CD14-positive monocyte (primary cell): ENCODE measurements at regions of chr16 and their contacts with region 1.

Region 1: DNA sequence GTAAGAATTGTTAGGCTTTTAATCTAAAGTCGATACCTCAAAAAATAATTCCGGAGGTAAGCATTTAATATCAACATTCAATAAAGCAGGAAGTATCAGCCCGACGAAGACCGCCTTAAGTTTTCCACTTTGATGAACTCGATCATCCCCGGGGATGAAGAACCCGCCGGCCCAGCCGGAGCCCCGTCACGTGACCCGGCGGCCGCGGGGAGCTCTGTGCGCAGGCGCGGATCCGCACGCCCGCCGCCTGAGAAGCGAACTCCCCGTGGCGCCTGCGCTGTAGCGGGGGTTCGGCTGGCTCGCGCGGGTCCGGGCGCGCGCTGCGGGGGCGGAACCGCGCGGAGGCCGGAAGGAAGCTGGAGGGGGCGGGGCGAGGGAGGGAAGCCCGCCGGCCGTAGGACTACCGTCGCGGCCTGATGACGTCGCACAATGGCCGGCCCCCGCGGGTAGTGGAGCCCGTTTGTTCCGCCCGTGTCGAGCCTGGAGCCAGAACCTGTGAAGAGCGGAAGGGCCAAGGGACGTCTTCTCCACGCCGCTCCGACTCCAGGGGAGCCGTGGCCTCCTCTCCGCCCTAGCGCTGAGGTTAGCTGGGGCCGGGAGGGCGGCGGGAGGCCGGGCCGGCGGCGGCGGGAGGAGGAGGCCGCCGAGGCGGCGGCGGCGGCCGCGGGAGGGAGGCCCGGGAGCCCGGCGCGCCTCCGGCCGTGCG is at the start of gene ZC3H18:
- DNase-seq: peak; percentile 94 to 97 (median 95)
- H3K4me3 ChIP-seq: peak within 1 kb of the TSS; percentile 61 to 88 (median 78)
- H3K4me3 Mint-ChIP-seq: peak within 1 kb of the TSS; percentile 85 to 90
- H3K27ac ChIP-seq: peak within 1 kb of the TSS; percentile 69 to 74
- H3K27ac Mint-ChIP-seq: peak within 1 kb of the TSS; percentile 83 to 93 (median 85)
- H3K4me1 ChIP-seq: peaks cover 18 to 26% of the 10 kb centered on the region in 2 donors
- H3K4me1 Mint-ChIP-seq: peaks cover 20% of the 10 kb centered on the region
- H3K27me3 ChIP-seq: no peaks in the 10 kb centered on the region
- H3K27me3 Mint-ChIP-seq: peaks cover 0 to 5% (median 0%) of the 10 kb centered on the region in 3 donors
- CTCF ChIP-seq: no peak
- polyA plus RNA-seq, gene ZC3H18: 5.5 to 36.4 (median 6.8) TPM

Region 2: GRCh38 chr16:87765776-87766484 is 804.2 kb before region 1 on chr16 and contains the start of gene KLHDC4:
- intact Hi-C with region 1: loop called (anchors 5 kb)
- DNase-seq: peak; percentile 80 to 86 (median 81)
- H3K4me3 ChIP-seq: peak within 1 kb of the TSS; percentile 79 to 93 (median 86)
- H3K4me3 Mint-ChIP-seq: peak within 1 kb of the TSS; percentile 100
- H3K27ac ChIP-seq: peak within 1 kb of the TSS; percentile 79 to 92
- H3K27ac Mint-ChIP-seq: peak within 1 kb of the TSS; percentile 96 to 99 (median 97)
- H3K4me1 ChIP-seq: peaks cover 13 to 18% of the 10 kb centered on the region in 2 donors
- H3K4me1 Mint-ChIP-seq: peaks cover 22% of the 10 kb centered on the region
- H3K27me3 ChIP-seq: no peaks in the 10 kb centered on the region
- H3K27me3 Mint-ChIP-seq: peaks cover 0 to 10% (median under 1%) of the 10 kb centered on the region in 3 donors
- CTCF ChIP-seq: no peak
- polyA plus RNA-seq, gene KLHDC4: 11.2 to 26.4 (median 12.6) TPM

Region 3: DNA sequence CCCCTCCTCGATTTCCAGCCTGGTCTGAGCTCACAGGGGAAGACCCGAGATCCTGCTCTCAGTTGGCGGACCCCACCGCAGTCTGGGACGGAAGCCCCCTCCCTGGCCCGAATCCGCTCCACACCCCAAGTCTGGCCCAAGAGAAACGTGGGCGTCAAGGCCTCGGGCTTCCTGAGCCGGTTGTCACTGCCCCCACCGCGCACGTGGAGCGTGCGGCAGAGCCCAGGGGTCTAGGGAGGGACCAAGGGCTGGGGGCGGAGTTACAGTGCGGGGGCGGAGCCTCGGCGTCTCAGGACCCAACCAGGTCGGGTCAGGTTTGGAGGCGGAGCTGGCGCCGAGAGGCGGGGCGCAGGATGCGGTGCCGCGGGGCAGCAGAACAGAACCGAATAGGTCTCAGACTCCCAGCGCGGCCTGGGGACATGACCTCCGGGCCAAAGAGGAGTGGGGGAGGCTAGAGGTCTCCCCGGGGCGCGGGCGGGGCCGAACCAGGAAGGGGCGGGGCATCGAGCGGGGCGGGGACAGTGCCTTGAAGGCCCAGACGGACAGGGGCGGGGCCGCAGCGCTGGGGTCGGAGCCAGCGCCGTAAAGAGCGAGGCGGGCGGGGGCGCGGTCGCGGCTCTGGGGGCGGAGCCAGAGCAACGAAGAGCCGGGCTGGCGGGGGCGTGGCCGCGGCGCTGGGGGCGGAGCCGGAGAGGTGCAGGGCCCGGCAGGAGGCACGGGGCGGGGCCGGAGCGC is 117.5 kb before region 1 on chr16:
- intact Hi-C with region 1: loop called in 1 of 2 experiments (anchors 5 kb)
- DNase-seq: peak; percentile 91 to 95 (median 94)
- H3K4me3 ChIP-seq: peak overlapping the region; percentile 38 to 83 (median 65)
- H3K4me3 Mint-ChIP-seq: peak overlapping the region; percentile 79 to 87
- H3K27ac ChIP-seq: peak overlapping the region; percentile 58 to 75
- H3K27ac Mint-ChIP-seq: peak overlapping the region; percentile 57 to 94 (median 82)
- H3K4me1 ChIP-seq: peaks cover 46 to 60% of the 10 kb centered on the region in 2 donors
- H3K4me1 Mint-ChIP-seq: peaks cover 44% of the 10 kb centered on the region
- H3K27me3 ChIP-seq: peaks cover 27 to 59% of the 10 kb centered on the region in 2 donors
- H3K27me3 Mint-ChIP-seq: peaks cover 52 to 86% (median 57%) of the 10 kb centered on the region in 3 donors
- CTCF ChIP-seq: no peak

Region 4: DNA sequence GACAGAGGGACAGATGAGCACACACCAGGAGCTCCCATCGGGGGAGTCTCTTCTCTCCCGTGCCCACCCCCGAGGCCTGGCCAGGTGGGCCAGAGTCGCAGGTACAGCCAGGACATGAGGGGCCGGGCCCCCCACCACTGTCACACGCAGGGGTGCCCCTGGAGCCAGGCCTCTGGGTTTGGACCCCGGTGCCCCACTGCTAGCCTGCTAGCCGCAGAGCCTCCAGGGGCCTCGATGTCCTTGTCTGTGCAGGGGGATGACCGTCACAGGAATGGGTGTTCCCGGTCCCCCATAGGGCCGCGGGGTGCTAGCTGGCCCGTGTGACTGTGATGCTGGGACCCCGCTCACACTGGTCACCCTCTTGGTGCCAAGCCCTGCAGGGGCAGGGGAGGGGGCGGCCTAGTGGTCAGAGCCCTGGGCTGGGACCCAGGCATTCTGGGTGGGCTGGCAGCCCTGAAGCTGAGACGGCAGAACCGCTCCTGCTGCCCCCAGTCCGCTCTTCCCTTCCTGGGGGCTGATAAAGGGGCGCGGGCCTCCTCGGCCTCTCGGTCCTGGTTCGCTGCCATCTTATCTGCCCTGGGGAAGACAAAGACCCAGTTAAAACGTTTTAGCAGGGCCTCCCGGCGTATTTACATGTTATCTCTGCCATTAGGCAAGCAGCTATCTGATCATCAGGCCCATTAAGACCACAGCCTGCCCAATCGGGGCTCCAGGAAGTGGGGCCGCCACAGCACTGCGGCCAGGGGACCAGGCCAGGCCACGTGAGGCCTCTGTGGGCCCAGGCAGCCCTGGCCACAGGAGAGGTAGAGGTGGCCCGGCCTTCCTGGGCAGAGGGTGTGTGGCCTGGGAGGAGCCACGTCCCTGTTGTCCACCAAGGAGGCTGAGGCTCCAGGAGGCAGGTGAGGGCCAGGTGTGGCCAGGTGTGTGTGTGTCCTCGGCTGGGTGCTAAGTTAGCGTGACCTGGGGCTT is 57.1 kb before region 1 on chr16:
- intact Hi-C with region 1: no loop called
- DNase-seq: no peak
- H3K4me3 ChIP-seq: no peak overlapping the region
- H3K4me3 Mint-ChIP-seq: no peak overlapping the region
- H3K27ac ChIP-seq: no peak overlapping the region
- H3K27ac Mint-ChIP-seq: no peak overlapping the region
- H3K4me1 ChIP-seq: no peaks in the 10 kb centered on the region
- H3K4me1 Mint-ChIP-seq: no peaks in the 10 kb centered on the region
- H3K27me3 ChIP-seq: no peaks in the 10 kb centered on the region
- H3K27me3 Mint-ChIP-seq: peaks cover 1 to 5% (median 1%) of the 10 kb centered on the region in 3 donors
- CTCF ChIP-seq: no peak

Region 5: GRCh38 chr16:88662843-88663606 is 92.9 kb after region 1 on chr16 and contains the start of gene MVD:
- intact Hi-C with region 1: loop called (anchors 5 to 10 kb)
- DNase-seq: peak; percentile 97 to 98 (median 98)
- H3K4me3 ChIP-seq: peak within 1 kb of the TSS; percentile 69 to 87 (median 81)
- H3K4me3 Mint-ChIP-seq: peak within 1 kb of the TSS; percentile 83 to 91
- H3K27ac ChIP-seq: peak within 1 kb of the TSS; percentile 20 to 93
- H3K27ac Mint-ChIP-seq: peak within 1 kb of the TSS; percentile 83 to 98 (median 92)
- H3K4me1 ChIP-seq: peaks cover 20 to 21% of the 10 kb centered on the region in 2 donors
- H3K4me1 Mint-ChIP-seq: peaks cover 19% of the 10 kb centered on the region
- H3K27me3 ChIP-seq: no peaks in the 10 kb centered on the region
- H3K27me3 Mint-ChIP-seq: peaks cover 0 to 3% (median 3%) of the 10 kb centered on the region in 3 donors
- CTCF ChIP-seq: no peak
- polyA plus RNA-seq, gene MVD: 9.0 to 17.9 (median 12.2) TPM

Region 6: GRCh38 chr16:88706288-88706964 is 136.3 kb after region 1 on chr16 and contains the starts of genes CTU2 and RNF166:
- intact Hi-C with region 1: loop called in 1 of 2 experiments (anchors 2 kb)
- DNase-seq: peak; percentile 87 to 94 (median 90)
- H3K4me3 ChIP-seq: peak within 1 kb of the TSS; percentile 78 to 96 (median 93)
- H3K4me3 Mint-ChIP-seq: peak within 1 kb of the TSS; percentile 99
- H3K27ac ChIP-seq: peak within 1 kb of the TSS; percentile 84 to 88
- H3K27ac Mint-ChIP-seq: peak within 1 kb of the TSS; percentile 90 to 99 (median 98)
- H3K4me1 ChIP-seq: peaks cover 49 to 55% of the 10 kb centered on the region in 2 donors
- H3K4me1 Mint-ChIP-seq: peaks cover 46% of the 10 kb centered on the region
- H3K27me3 ChIP-seq: no peaks in the 10 kb centered on the region
- H3K27me3 Mint-ChIP-seq: peaks cover 0 to 4% (median 3%) of the 10 kb centered on the region in 3 donors
- CTCF ChIP-seq: no peak
- polyA plus RNA-seq, gene CTU2: 5.9 to 10.3 (median 7.5) TPM
- polyA plus RNA-seq, gene RNF166: 99.3 to 255 (median 120) TPM

Region 7: GRCh38 chr16:89115216-89115861 is 545.2 kb after region 1 on chr16:
- intact Hi-C with region 1: loop called in 1 of 2 experiments (anchors 2 kb)
- DNase-seq: peak; percentile 93 to 98 (median 96)
- H3K4me3 ChIP-seq: peak overlapping the region; percentile 25 to 72 (median 30)
- H3K4me3 Mint-ChIP-seq: peak overlapping the region; percentile 81 to 89
- H3K27ac ChIP-seq: peak overlapping the region; percentile 65 to 88
- H3K27ac Mint-ChIP-seq: peak overlapping the region; percentile 92 to 99 (median 96)
- H3K4me1 ChIP-seq: peaks cover 42 to 52% of the 10 kb centered on the region in 2 donors
- H3K4me1 Mint-ChIP-seq: peaks cover 45% of the 10 kb centered on the region
- H3K27me3 ChIP-seq: no peaks in the 10 kb centered on the region
- H3K27me3 Mint-ChIP-seq: peaks cover 0 to 2% (median 0%) of the 10 kb centered on the region in 3 donors
- CTCF ChIP-seq: no peak